Dorsolateral prefrontal cortex (tissue), 120 donors: ENCODE measurements at regions of chr1 and their contacts with region 1.

Region 1: DNA sequence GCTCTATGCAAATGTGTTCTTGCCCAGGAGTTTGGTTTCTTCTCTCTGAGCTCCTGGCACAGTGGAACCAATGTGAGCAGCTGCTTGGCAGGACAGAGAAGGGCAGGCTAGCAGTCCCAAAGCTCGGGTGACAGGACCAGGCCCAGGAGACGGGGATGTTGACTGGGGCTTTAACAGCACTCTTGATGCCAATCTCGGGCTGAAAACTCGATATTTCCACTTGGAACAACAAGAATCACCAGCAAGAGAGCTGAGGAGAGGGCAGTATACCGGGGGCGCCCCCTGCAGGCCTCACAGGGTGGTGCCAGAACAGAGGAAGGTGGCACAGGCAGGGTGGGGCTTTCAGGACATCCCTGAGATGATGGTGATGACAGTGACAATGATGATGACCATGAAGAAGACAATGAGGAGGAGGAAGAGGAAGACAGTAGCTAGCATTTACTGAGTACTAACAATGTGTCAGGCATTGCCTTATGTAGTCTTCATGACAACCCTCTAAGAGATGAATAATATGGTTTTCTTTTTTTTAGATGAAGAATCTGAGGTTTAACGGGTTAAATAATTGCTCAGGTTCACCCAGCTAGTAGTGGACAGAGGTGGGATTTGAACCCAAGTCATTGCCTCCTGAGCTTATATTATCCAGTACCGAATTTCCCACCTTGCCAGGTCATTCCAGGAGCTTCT is 2.7 kb upstream of the KCNJ9 start:
- DNase-seq: peak in 9 of 10 donors; percentile 67 to 89 (median 81)
- H3K4me3 ChIP-seq: peak overlapping the region in 1 of 59 donors; percentile 36
- H3K27ac ChIP-seq: peak overlapping the region in 58 of 59 donors; percentile 44 to 100 (median 93)
- H3K27me3 ChIP-seq: no peaks in the 10 kb centered on the region
- CTCF ChIP-seq: peak; percentile 60 to 99 (median 90)

Region 2: DNA sequence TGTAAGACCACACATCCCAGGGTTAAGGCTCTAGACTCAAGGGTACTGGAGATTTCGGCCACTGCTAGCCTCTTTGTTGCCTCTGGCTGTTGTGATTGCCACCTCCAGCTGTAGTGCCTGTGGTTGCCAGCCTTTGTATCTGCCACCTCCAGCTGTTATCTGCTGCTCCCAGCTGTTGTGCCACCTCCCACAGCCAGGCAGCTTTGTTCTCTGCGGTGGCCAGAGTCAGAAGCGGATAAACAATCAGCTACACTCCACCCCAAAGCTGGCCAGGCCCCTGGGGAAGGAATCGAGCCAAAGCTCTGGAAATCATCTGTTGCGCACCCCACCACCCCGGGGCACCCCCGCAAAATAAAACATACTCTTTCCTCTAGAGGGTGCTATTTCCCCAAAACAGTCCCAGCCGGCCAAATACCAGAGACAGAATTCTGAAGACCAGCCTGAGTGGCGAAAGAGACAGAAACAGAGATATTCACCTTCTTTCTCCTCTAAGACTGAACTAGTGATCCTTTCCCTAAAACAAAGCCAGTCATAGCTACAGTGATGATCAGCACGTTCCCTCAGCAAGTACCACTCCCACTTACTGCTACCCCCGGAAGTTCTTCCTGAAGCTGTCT is 32.1 kb before region 1 on chr1:
- intact Hi-C with region 1: loop called (anchors 2 kb)
- DNase-seq: peak; percentile 54 to 96 (median 89)
- H3K4me3 ChIP-seq: peak overlapping the region in 25 of 59 donors; percentile 5 to 42 (median 22)
- H3K27ac ChIP-seq: peak overlapping the region; percentile 8 to 100 (median 90)
- H3K27me3 ChIP-seq: no peaks in the 10 kb centered on the region
- CTCF ChIP-seq: peak; percentile 64 to 95 (median 80)

Region 3: DNA sequence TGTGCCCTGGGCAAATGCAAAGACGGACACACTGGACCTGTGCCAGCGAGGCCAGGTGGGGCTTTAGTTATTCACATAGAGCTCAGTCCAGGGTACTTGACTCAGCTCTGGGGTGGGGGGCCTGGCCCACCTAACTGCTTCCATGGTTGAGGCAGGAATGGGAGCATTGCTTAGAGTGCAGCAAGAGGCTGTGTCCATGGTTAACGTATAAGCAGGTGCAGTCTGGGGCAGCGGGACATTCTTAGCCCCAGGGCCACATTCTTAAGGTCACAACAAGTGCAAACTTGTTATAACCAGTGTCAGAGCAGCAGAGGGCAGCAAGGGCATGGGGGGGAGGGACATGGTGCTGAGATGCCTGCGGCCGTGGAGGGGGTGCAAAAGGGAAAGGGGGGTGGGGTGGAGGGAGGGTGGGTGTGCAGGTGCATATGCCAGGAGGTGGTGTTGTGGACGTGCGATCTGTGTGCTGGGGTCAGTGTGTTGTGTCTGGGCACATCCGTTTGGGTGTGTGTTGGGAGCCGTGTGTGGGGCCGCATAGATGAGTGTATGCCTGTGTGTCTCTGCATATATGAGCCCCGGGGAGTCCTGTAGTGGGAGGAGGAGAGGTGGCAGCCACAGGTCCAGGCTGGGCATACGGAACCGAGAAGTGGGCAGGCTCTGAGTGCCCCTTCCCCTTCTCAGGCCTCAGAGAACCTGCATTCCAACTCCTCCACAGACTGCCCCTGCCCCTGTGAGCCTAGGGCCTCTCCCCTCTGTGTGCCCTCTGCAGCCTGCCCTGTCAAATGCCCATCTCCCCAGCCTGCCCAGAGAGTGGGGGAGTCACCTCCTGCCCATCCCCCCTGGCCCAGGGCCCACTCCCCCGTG is 17.1 kb before region 1 on chr1:
- intact Hi-C with region 1: loop called in 1 of 2 experiments (anchors 1 kb)
- DNase-seq: peak in 3 of 10 donors; percentile 59 to 71 (median 68)
- H3K4me3 ChIP-seq: peak overlapping the region in 44 of 59 donors; percentile 1 to 57 (median 33)
- H3K27ac ChIP-seq: peak overlapping the region; percentile 19 to 100 (median 97)
- H3K27me3 ChIP-seq: no peaks in the 10 kb centered on the region
- CTCF ChIP-seq: peak in 35 of 56 donors; percentile 8 to 66 (median 25)